CD8-positive, alpha-beta T cell (primary cell): ENCODE measurements at regions of chr9 and their contacts with region 1.

Region 1: DNA sequence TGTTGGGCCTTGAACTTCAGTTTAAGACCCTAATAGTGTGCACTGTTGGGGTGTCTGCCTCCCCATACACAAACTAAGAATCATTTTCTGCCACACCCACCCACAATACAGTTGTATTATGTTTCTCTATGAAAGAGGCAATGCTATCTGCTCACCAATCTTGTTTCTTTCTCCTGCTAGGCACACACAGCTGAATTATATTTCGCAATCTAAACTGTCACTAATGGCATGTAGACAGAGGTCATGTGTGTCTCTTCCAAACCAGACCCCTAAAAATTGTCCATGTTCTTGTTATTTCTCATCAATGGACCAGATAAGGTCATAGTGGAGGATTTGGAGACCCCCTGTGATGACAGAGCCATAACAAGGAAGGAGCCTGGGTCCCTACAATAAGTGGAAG is 57.3 kb downstream of the RIGI start:
- DNase-seq: no peak
- ATAC-seq: no peak
- H3K4me3 ChIP-seq: no peak overlapping the region
- H3K4me3 Mint-ChIP-seq: no peak overlapping the region
- H3K27ac ChIP-seq: no peak overlapping the region
- H3K27ac Mint-ChIP-seq: no peak overlapping the region
- H3K4me1 ChIP-seq: no peaks in the 10 kb centered on the region
- H3K4me1 Mint-ChIP-seq: no peaks in the 10 kb centered on the region
- H3K27me3 ChIP-seq: no peaks in the 10 kb centered on the region
- H3K27me3 Mint-ChIP-seq: no peaks in the 10 kb centered on the region
- CTCF ChIP-seq: no peak

Region 2: GRCh38 chr9:32487981-32488380 is 19.2 kb after region 1 on chr9:
- CTCF ChIA-PET with region 1: interaction called, 4 read pairs
- POLR2A ChIA-PET with region 1: interaction called, 4 read pairs
- intact Hi-C with region 1: loop called in 1 of 2 experiments (anchors 2 kb)
- DNase-seq: no peak
- ATAC-seq: no peak
- H3K4me3 ChIP-seq: no peak overlapping the region
- H3K4me3 Mint-ChIP-seq: no peak overlapping the region
- H3K27ac ChIP-seq: no peak overlapping the region
- H3K27ac Mint-ChIP-seq: no peak overlapping the region
- H3K4me1 ChIP-seq: no peaks in the 10 kb centered on the region
- H3K4me1 Mint-ChIP-seq: no peaks in the 10 kb centered on the region
- H3K27me3 ChIP-seq: no peaks in the 10 kb centered on the region
- H3K27me3 Mint-ChIP-seq: no peaks in the 10 kb centered on the region
- CTCF ChIP-seq: no peak